ENCODE measurements at regions of chr2 and their contacts with region 1.

Region 1: GRCh38 chr2:38835015-38835601 is 40.6 kb downstream of the DHX57 start:
- DNase-seq: peak; percentile 5
- H3K4me3 ChIP-seq: no peak overlapping the region
- H3K27ac ChIP-seq: no peak overlapping the region
- H3K4me1 ChIP-seq: no peaks in the 10 kb centered on the region
- H3K27me3 ChIP-seq: no peaks in the 10 kb centered on the region
- CTCF ChIP-seq: peak; percentile 21 to 40

Region 2: DNA sequence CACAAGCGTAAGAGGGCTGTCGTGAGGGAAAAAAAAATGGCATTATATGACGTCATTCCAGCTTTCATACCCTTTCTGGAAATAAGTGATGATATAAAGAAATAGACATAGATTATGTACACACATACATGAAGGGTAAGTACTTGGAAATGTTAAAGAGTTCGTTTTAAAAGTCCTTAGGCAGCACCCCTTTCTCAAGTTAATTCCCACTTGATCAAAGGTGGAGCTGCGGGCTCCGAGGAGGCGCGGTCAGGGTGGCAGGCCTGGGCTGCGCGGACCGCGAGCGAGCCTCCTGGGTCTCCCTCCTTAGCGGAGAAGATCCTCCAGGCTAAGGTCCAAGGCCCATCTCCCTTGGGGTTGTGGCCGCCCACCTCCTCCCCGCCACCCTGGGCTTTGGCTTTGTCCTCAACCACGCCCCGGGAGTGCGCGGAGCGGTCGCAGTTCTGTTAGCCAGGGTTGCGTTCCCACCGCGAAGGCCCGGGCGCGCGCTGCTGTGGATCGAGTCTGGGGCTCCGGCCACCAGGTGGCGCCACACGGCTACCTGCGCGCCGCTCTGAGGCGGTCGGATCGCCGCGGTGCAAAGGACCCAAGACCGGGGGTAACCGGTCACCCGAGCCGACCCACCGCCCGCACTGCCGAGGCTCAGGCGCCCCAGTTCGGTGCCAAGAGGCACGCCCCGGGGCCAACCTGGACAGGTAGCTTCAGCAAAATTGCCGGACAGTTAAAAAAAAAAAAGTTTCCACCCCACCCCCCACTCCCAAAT is 299.2 kb before region 1 on chr2:
- CTCF ChIA-PET with region 1: interaction called, 3 read pairs
- dilution Hi-C with region 1: no loop called
- in situ Hi-C with region 1: no loop called
- intact Hi-C with region 1: loop called (anchors 1 kb)
- DNase-seq: peak; percentile 53
- H3K4me3 ChIP-seq: peak overlapping the region; percentile 44 to 54 (median 45)
- H3K27ac ChIP-seq: no peak overlapping the region
- H3K4me1 ChIP-seq: peaks cover 6% of the 10 kb centered on the region
- H3K27me3 ChIP-seq: no peaks in the 10 kb centered on the region
- CTCF ChIP-seq: peak; percentile 61 to 87

Region 3: DNA sequence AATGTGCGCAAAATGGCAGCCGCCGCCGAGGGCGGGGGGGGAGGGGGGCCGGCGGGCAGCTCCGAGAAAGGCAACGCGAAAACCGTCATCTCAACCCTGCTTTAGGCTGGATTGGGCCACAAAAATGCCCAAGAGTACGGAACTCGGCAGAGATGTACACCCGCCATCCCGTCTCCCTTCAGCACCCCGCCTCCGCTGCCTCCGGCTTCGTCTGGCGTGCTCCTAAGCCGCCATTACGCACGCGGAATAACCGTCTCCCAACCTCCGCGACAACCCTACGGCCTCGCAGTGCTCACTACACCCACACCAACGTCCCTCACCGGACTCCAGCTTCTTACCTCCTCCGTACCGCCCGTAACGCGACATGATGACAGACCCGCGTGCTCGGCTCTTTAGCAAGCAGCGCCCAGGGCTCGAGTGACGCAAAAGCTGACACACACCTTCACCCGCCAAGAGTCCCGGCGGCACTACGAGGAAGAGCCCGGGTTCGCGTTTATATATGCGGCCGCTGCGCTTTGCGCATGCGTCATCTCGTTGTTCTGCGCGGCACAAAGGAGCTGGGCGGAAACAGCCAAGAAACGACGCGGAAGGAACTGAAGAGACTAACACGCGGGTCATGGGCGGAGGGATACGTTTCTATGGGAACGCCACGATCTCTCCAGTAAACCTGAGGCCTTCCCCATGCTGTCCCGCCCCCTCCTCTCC is 84.1 kb before region 1 on chr2 and contains the start of gene SRSF7:
- CTCF ChIA-PET with region 1: no interaction called
- dilution Hi-C with region 1: no loop called
- in situ Hi-C with region 1: no loop called
- intact Hi-C with region 1: loop called (anchors 10 kb)
- DNase-seq: peak; percentile 96
- H3K4me3 ChIP-seq: peak within 1 kb of the TSS; percentile 70 to 91 (median 89)
- H3K27ac ChIP-seq: peak within 1 kb of the TSS; percentile 90
- H3K4me1 ChIP-seq: peaks cover 19% of the 10 kb centered on the region
- H3K27me3 ChIP-seq: no peaks in the 10 kb centered on the region
- CTCF ChIP-seq: no peak
- total RNA-seq, gene SRSF7: 72.7 to 183 TPM